Motor neuron (in vitro differentiated cells): ENCODE measurements at regions of chr1 and their contacts with region 1.

Region 1: GRCh38 chr1:149962123-149962548 is 25.5 kb upstream of the MTMR11 start:
- ATAC-seq: peak; percentile 72 to 88 (median 78)
- H3K4me3 ChIP-seq: no peak overlapping the region
- H3K27ac ChIP-seq: no peak overlapping the region
- H3K4me1 ChIP-seq: no peaks in the 10 kb centered on the region

Region 2: GRCh38 chr1:150021191-150021694 is 59.1 kb after region 1 on chr1:
- in situ Hi-C with region 1: loop called in 1 of 9 experiments (anchors 10 kb)
- ATAC-seq: peak in 3 of 8 experiments; percentile 33 to 70 (median 58)
- H3K4me3 ChIP-seq: no peak overlapping the region
- H3K27ac ChIP-seq: no peak overlapping the region
- H3K4me1 ChIP-seq: no peaks in the 10 kb centered on the region

Region 3: DNA sequence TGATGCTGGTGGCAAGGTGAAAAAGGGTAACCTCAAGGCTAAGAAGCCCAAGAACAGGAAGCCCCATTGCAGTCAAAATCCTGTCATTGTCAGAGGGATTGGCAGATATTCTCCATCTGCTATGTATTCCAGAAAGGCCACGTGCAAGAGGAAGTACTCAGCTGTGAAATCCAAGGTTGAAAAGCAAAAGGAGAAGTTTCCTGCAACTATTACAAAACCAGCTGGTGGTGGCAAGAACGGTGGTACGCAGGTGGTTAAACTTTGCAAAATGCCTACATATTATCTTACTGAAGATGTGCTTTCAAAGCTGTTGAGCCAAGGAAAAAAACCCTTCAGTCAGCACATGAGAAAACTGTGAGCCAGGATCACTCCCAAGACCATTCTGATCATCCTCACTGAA is 91.8 kb after region 1 on chr1:
- in situ Hi-C with region 1: loop called in 3 of 9 experiments (anchors 10 to 25 kb)
- ATAC-seq: no peak
- H3K4me3 ChIP-seq: no peak overlapping the region
- H3K27ac ChIP-seq: no peak overlapping the region
- H3K4me1 ChIP-seq: no peaks in the 10 kb centered on the region

Region 4: DNA sequence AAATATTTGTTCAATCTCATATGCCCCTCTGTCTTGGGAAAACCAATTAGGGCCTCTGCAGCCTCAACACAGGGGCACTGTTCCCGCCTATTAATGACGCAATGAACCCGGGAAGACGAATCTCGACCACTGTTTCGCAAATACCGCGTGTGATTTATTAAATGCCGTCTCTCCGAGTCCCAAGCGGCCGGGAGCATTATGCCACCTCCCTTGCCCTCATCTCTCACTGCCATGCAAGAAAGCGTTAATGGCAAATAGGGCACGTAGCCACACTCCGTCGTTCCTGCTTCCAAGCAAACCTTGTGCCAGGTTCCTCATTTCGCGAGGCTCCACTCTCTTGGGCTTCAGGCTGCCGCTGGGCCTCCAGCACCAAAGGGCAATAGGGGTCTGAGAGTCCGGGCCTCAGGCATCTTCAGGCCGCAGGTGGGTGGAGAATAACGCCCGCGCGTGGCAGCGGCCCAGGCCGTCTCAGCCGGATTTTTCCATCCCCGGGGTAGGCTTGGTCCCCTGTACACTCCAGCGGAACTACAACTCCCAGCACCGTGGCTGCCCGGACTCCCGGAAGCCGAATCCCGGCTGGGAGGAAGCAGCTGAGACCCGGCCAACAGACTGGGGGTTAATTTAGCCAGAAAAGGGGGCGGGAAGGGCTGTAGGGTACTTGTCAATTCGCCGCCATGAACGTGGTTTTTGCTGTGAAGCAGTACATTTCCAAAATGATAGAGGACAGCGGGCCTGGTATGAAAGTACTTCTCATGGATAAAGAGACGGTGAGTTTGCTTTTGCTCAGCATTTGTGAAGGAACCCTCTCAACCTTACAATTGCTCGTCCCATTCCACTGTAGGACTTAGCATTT is 105.3 kb after region 1 on chr1 and contains the start of gene VPS45:
- in situ Hi-C with region 1: loop called in 1 of 9 experiments (anchors 25 kb)
- ATAC-seq: peak; percentile 95 to 97 (median 96)
- H3K4me3 ChIP-seq: peak within 1 kb of the TSS; percentile 48 to 90 (median 65)
- H3K27ac ChIP-seq: peak within 1 kb of the TSS; percentile 94 to 97
- H3K4me1 ChIP-seq: peaks cover 13 to 19% of the 10 kb centered on the region in 2 donors
- total RNA-seq, gene VPS45: 37.4 to 109 (median 75.6) TPM

Region 5: GRCh38 chr1:150168960-150169601 is 206.9 kb after region 1 on chr1:
- in situ Hi-C with region 1: no loop called
- ATAC-seq: peak; percentile 68 to 86 (median 81)
- H3K4me3 ChIP-seq: no peak overlapping the region
- H3K27ac ChIP-seq: no peak overlapping the region
- H3K4me1 ChIP-seq: peaks cover 9 to 10% of the 10 kb centered on the region in 2 donors

Region 6: DNA sequence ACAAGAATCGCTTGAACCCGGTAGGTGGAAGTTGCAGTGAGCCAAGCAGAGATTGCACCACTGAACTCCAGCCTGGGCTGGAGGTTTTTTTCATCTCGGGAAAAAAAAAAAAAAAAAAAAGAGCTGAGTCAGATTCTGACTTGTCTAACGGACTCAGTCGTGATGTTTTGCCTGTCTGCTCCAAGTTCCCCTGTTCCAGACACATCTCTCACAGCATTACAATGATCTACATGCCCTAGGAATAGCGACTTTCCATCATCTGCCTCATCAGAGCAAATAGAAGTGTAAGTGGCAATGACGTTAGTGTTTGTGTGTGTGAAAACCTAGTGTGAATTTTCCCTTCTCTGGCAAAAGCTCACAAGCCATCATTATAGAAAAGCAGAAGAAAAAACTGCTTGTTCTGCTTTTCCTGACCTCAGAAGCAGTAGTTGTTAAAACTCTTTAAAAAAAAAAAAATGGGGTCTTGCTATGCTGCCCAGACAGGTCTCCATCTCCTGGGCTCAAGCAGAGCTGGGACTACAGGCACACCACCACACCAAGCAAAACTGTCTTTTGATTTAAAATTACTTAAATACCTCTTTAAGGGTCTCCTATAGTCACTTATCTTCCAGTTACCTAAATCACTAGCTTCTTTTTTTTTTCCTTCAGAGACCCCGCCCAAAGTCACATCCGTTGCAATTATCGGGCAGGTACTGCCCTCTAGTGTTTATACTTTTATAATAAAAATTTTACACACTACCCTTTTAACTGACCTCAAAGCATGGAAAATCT is 224.8 kb after region 1 on chr1:
- in situ Hi-C with region 1: loop called in 3 of 9 experiments (anchors 25 kb)
- ATAC-seq: peak in 5 of 8 experiments; percentile 33 to 86 (median 59)
- H3K4me3 ChIP-seq: no peak overlapping the region
- H3K27ac ChIP-seq: no peak overlapping the region
- H3K4me1 ChIP-seq: peaks cover 1 to 5% of the 10 kb centered on the region in 2 donors

Region 7: DNA sequence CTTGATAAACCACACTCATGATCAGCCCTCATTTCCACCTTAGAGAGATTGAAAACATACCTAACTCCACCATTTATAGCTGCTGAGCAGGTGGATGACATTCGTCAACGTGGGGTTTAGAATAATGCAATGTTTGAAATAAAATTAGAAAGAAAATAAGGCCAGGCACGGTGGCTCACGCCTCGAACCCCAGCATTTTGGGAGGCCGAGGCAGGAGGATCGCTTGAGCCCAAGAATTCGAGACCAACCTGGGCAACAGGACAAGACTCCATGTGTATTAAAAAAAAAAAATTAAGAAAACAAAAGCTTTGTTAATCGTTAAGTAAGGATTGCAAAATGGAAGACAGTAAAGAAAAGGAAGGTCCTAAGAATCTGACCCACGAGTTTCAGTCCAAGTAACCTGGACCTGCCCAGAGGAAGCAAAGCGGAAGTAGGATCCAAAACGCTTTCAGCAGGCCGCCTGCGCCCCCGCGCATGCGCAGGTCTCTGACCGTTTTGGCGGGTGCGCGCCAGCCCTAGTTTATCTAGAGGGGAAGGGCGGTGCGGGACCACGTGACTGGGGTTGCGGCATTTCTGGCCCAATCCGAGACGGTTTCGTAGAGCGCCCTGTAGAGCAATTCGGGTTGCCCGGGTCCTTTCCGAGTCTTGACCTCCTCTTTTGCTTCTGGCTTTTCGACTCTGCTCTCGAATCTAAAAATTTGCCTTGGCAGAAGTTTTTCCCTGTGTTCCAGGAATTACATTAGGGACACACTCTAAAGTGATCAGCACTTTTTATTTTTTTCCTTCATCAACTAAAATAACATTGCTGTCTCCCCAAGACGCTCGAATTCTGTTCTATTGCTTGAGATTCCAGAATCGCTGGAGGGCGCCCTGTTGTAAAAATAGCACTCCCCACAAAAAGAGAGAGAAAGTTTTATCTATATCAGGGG is 251.3 kb after region 1 on chr1:
- in situ Hi-C with region 1: loop called in 1 of 9 experiments (anchors 25 kb)
- ATAC-seq: peak; percentile 99 to 100 (median 100)
- H3K4me3 ChIP-seq: peak overlapping the region; percentile 30 to 43 (median 40)
- H3K27ac ChIP-seq: peak overlapping the region in 1 of 2 donors; percentile 13
- H3K4me1 ChIP-seq: peaks cover 0 to 5% of the 10 kb centered on the region in 2 donors

Region 8: GRCh38 chr1:150498342-150498741 is 536.2 kb after region 1 on chr1:
- in situ Hi-C with region 1: no loop called
- ATAC-seq: no peak
- H3K4me3 ChIP-seq: no peak overlapping the region
- H3K27ac ChIP-seq: no peak overlapping the region
- H3K4me1 ChIP-seq: no peaks in the 10 kb centered on the region